Activated B cell treated with CpG ODN at 0.5 μM for 24 hours (primary cell): ENCODE measurements at regions of chr13 and their contacts with region 1.

Region 1: GRCh38 chr13:77207943-77208342 is 119.0 kb downstream of the MYCBP2 start:
- DNase-seq: no peak
- ATAC-seq: no peak
- H3K4me3 Mint-ChIP-seq: no peak overlapping the region
- H3K27ac Mint-ChIP-seq: peak overlapping the region; percentile 55
- H3K4me1 Mint-ChIP-seq: no peaks in the 10 kb centered on the region
- H3K27me3 Mint-ChIP-seq: no peaks in the 10 kb centered on the region
- CTCF ChIP-seq: no peak

Region 2: DNA sequence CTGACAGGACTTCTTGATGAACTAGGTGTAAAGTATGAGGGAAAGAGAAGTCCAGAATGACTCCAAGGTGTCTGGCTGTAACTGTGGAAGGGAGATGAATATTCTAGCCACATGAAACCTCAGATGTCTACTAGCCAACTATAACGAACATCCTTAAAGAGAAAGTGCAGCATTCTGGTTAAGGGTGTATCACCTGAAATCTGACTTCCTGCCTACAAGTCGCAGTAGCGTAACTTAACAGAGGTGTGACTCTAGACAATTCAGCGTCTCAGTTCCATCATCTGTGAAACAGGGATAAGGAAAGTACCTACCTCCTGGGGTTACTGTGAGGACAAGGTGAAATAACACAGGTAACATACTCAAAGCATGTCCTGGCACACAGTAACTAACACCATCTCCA is 35.3 kb before region 1 on chr13:
- CTCF ChIA-PET with region 1: no interaction called
- POLR2A ChIA-PET with region 1: no interaction called
- intact Hi-C with region 1: loop called (anchors 5 kb)
- DNase-seq: no peak
- ATAC-seq: no peak
- H3K4me3 Mint-ChIP-seq: no peak overlapping the region
- H3K27ac Mint-ChIP-seq: no peak overlapping the region
- H3K4me1 Mint-ChIP-seq: no peaks in the 10 kb centered on the region
- H3K27me3 Mint-ChIP-seq: no peaks in the 10 kb centered on the region
- CTCF ChIP-seq: no peak